Activated CD8-positive, alpha-beta T cell treated with anti-CD3 and anti-CD28 coated beads for 36 hours (primary cell): ENCODE measurements at regions of chr6 and their contacts with region 1.

Region 1: GRCh38 chr6:43608310-43608763 is 20.7 kb downstream of the GTPBP2 start:
- DNase-seq: peak; percentile 82
- ATAC-seq: peak; percentile 45
- H3K4me3 Mint-ChIP-seq: no peak overlapping the region
- H3K27ac Mint-ChIP-seq: no peak overlapping the region
- H3K4me1 Mint-ChIP-seq: peaks cover 2% of the 10 kb centered on the region
- H3K27me3 Mint-ChIP-seq: no peaks in the 10 kb centered on the region
- CTCF ChIP-seq: peak; percentile 75

Region 2: GRCh38 chr6:43559328-43559727 is 49.0 kb before region 1 on chr6:
- CTCF ChIA-PET with region 1: interaction called, 10 read pairs
- POLR2A ChIA-PET with region 1: interaction called, 3 read pairs
- intact Hi-C with region 1: no loop called
- DNase-seq: no peak
- ATAC-seq: no peak
- H3K4me3 Mint-ChIP-seq: no peak overlapping the region
- H3K27ac Mint-ChIP-seq: no peak overlapping the region
- H3K4me1 Mint-ChIP-seq: no peaks in the 10 kb centered on the region
- H3K27me3 Mint-ChIP-seq: no peaks in the 10 kb centered on the region
- CTCF ChIP-seq: no peak

Region 3: GRCh38 chr6:43575772-43576551 is 32.4 kb before region 1 on chr6 and contains the starts of genes POLH and XPO5:
- CTCF ChIA-PET with region 1: interaction called, 16 read pairs
- POLR2A ChIA-PET with region 1: interaction called, 4 read pairs
- intact Hi-C with region 1: no loop called
- DNase-seq: peak; percentile 93
- ATAC-seq: peak; percentile 94
- H3K4me3 Mint-ChIP-seq: peak within 1 kb of the TSS; percentile 90
- H3K27ac Mint-ChIP-seq: peak within 1 kb of the TSS; percentile 84
- H3K4me1 Mint-ChIP-seq: peaks cover 41% of the 10 kb centered on the region
- H3K27me3 Mint-ChIP-seq: no peaks in the 10 kb centered on the region
- CTCF ChIP-seq: no peak
- total RNA-seq, gene POLH: 37.9 to 42.1 TPM
- total RNA-seq, gene XPO5: 92.3 to 92.6 TPM

Region 4: GRCh38 chr6:43593938-43594337 is 14.4 kb before region 1 on chr6:
- CTCF ChIA-PET with region 1: interaction called, 16 read pairs
- POLR2A ChIA-PET with region 1: no interaction called
- intact Hi-C with region 1: no loop called
- DNase-seq: no peak
- ATAC-seq: no peak
- H3K4me3 Mint-ChIP-seq: no peak overlapping the region
- H3K27ac Mint-ChIP-seq: no peak overlapping the region
- H3K4me1 Mint-ChIP-seq: no peaks in the 10 kb centered on the region
- H3K27me3 Mint-ChIP-seq: no peaks in the 10 kb centered on the region
- CTCF ChIP-seq: no peak

Region 5: GRCh38 chr6:43629505-43630300 is 21.4 kb after region 1 on chr6:
- CTCF ChIA-PET with region 1: interaction called, 17 read pairs
- POLR2A ChIA-PET with region 1: interaction called, 4 read pairs
- intact Hi-C with region 1: no loop called
- DNase-seq: peak; percentile 97
- ATAC-seq: peak; percentile 76
- H3K4me3 Mint-ChIP-seq: peak overlapping the region; percentile 98
- H3K27ac Mint-ChIP-seq: peak overlapping the region; percentile 100
- H3K4me1 Mint-ChIP-seq: peaks cover 24% of the 10 kb centered on the region
- H3K27me3 Mint-ChIP-seq: no peaks in the 10 kb centered on the region
- CTCF ChIP-seq: no peak

Region 6: GRCh38 chr6:43702534-43703440 is 94.5 kb after region 1 on chr6:
- CTCF ChIA-PET with region 1: no interaction called
- POLR2A ChIA-PET with region 1: no interaction called
- intact Hi-C with region 1: no loop called
- DNase-seq: peak; percentile 66
- ATAC-seq: peak; percentile 89
- H3K4me3 Mint-ChIP-seq: no peak overlapping the region
- H3K27ac Mint-ChIP-seq: no peak overlapping the region
- H3K4me1 Mint-ChIP-seq: peaks cover 7% of the 10 kb centered on the region
- H3K27me3 Mint-ChIP-seq: peaks cover 34% of the 10 kb centered on the region
- CTCF ChIP-seq: no peak